Posterior cingulate gyrus (tissue), 11 donors: ENCODE measurements at regions of chr4 and their contacts with region 1.

Region 1: GRCh38 chr4:4248029-4248884 is at the start of gene TMEM128:
- DNase-seq: peak; percentile 93 to 99 (median 95)

Region 2: DNA sequence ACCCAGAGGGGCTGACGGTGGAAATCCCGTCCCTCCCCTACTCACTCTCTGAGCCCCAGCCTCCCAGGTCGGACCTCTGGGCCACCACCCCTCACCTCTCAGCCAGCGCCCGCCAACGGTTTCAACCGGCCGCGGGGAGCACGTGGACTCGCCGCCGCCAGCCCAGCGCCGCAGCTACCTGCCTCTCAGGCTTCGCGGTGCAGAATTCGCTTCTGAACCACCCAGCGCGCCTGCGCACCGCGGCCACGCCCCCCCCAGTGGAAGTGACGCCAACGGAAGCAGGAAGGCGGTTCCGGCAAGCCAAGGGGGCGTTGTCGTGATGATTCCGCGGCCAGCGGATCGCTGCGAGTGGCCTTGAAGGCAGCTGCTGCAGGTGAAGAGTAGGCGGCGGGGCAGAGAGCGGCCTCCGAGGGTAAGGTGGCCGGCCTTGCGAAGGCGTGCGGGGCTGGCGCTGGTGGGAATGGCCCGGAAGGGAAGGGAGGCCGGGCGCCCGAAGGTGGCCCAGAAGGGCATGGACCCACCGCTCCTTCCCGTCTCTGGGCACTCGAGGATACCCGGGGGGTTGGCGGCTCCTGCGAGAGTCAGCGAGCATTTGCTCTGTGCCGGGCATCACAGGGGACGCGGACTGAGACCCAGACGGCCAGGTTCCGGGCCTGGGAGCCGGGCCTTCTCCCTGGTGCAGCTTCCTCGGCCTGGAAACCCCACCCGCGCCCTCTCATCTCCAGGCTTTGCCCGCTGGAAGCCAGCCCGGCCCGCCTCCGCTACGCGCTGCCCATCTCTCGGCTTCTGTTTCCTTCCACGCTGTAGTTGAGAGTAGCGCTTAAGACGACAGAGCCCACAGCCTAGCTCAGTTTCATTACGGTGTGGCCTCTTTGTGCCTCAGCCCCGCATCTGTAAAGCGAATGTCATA is 41.9 kb after region 1 on chr4 and contains the starts of genes LYAR and ZBTB49:
- intact Hi-C with region 1: loop called (anchors 1 kb)
- DNase-seq: peak; percentile 89 to 99 (median 94)

Region 3: DNA sequence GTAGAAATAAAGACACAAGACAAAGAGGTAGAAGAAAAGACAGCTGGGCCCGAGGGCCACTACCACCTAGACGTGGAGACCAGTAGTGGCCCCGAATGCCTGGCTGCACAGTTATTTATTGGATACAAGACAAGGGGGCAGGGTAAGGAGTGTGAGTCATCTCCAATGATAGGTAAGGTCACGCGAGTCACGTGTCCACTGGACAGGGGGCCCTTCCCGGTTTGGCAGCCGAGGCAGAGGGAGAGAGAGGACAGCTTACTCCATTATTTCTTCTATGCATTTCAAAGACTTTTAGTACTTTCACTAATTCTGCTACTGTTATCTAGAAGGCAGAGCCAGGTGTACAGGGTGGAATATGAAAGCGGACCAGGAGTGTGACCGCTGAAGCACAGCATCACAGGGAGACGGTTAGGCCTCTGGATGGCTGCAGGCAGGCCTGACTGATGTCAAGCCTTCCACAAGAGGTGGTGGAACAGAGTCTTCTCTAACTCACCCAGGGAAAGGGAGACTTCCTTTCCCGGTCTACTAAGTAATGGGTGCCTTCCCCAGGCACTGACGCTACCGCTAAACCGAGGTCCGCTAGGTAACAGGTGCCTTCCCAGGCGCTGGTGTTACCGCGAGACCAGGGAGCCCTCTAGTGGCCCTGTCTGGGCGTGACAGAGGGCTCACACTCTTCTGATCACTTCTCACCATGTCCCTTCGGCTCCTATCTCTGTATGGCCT is 86.7 kb after region 1 on chr4:
- intact Hi-C with region 1: loop called (anchors 1 kb)
- DNase-seq: peak in 9 of 10 donors; percentile 43 to 94 (median 65)

Region 4: DNA sequence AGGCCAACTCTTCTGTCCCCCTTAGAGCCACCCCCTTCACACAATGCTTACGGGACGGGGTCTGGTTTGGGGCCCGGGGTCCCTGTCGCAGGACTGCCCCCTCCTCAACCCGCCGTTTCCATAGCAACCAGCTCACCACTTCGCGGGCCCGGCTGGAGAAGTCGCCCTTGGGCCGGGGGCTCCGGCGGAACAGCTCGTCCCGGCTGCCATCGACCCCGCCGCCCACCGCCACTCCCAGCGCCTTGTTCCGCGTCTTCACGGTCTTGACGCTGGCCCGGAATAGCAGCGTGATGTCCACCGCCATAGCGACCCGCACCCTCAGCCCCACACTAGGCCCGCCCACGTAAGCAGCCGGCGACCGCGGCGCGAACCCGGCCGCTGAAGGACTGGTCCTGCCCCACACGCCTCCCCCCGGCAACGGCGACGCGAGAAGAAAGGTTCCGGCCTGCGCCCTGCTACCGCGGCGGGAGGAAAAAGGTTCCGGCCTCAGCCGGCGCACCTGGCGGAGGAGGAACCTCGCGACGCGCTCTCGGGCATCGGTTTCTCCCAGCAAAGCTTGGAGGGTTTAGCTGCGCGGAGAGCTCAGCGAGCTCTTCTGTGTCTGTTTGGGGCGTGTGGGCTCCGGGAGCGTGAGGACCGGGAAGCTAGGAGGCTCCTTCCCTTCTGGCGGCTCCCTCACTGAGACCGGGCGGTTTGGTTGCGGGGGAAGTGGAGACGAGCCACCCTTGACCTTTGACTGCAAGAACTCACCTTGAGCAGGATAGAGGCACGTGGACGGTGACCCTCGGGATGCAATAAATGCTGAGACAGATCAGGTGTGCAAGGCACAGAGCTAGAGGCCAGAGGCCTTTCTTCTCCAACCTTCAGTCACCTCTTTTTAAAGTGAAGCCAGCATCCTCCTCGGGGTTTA is 293.7 kb after region 1 on chr4 and contains the start of gene STX18:
- intact Hi-C with region 1: loop called (anchors 5 kb)
- DNase-seq: peak; percentile 75 to 98 (median 82)